GM10248 (cell line): ENCODE measurements at regions of chr11 and their contacts with region 1.

Region 1: GRCh38 chr11:11036848-11037732 is 179.2 kb upstream of the ZBED5 start:
- DNase-seq: peak; percentile 64
- CTCF ChIP-seq: peak; percentile 75

Region 2: GRCh38 chr11:10933455-10934292 is 103.4 kb before region 1 on chr11:
- CTCF ChIA-PET with region 1: interaction called, 15 read pairs
- POLR2A ChIA-PET with region 1: no interaction called
- DNase-seq: peak; percentile 79
- CTCF ChIP-seq: peak; percentile 89

Region 3: GRCh38 chr11:11022125-11022730 is 14.9 kb before region 1 on chr11:
- CTCF ChIA-PET with region 1: interaction called, 58 read pairs
- POLR2A ChIA-PET with region 1: no interaction called
- DNase-seq: peak; percentile 40
- CTCF ChIP-seq: peak; percentile 45

Region 4: DNA sequence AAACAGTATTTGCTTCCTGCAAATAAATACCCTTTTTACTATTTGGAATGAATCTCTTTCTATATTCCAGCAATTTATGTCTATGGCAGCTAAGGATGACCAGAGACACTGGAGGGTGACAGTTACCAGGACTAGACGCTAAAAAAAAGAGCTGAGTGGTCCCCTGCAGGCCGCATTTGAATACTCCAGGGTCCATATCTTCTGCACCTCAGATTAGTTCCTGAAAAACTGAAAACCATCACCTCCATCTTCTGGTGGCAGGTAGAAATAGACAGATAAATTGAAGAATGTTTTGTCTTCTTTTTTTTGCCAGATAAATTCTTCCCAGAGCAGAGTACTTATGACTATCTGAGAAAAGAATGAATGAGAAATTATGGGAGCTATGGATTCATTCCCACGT is 170.3 kb after region 1 on chr11:
- CTCF ChIA-PET with region 1: interaction called, 10 read pairs
- POLR2A ChIA-PET with region 1: no interaction called
- DNase-seq: no peak
- CTCF ChIP-seq: no peak

Region 5: DNA sequence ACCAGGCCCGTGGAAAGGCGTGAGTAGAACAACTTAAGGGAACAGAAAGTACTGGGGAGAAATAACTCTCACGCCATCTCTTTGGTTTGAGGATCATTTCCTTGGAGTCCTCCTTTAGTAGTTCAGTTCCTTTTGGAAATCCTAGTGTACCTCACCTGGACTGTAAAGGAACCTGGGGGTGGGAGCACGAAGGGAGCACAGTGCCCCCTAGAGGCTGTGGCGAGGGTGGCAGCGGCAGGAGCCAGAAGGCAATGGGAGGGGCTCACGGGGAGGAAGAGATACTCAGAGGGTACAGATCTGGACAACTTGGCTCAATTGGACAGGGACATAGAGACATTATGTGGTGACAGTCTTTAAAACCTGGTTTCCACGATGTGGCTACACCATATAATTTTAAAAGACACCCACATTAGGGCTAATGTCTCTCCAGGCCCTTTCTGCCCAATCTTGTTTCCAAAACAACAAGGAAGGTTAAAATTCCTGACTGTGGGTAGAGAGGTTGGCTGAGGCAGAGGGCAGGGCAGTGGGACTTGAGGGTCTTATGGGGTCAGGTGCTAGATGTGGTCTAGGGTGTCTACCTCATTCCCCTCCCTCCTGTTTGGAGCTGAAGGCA is 229.0 kb after region 1 on chr11:
- CTCF ChIA-PET with region 1: interaction called, 18 read pairs
- POLR2A ChIA-PET with region 1: no interaction called
- DNase-seq: peak; percentile 83
- CTCF ChIP-seq: peak; percentile 73

Region 6: GRCh38 chr11:11787305-11788062 is 750.4 kb after region 1 on chr11:
- CTCF ChIA-PET with region 1: interaction called, 61 read pairs
- POLR2A ChIA-PET with region 1: no interaction called
- DNase-seq: peak; percentile 59
- CTCF ChIP-seq: peak; percentile 70